Heart left ventricle (tissue), 16 donors: ENCODE measurements at regions of chr18 and their contacts with region 1.

Region 1: GRCh38 chr18:46411867-46412690 is 244.9 kb downstream of the LOXHD1 start:
- DNase-seq: peak in 4 of 5 donors; percentile 58 to 71 (median 62)
- ATAC-seq: peak; percentile 73 to 82 (median 76)
- H3K4me3 ChIP-seq: peak overlapping the region in 2 of 12 donors; percentile 9 to 22
- H3K27ac ChIP-seq: peak overlapping the region; percentile 35 to 98 (median 82)
- H3K4me1 ChIP-seq: peaks cover 4 to 91% (median 45%) of the 10 kb centered on the region in 12 donors
- H3K27me3 ChIP-seq: no peaks in the 10 kb centered on the region
- CTCF ChIP-seq: no peak
- POLR2A ChIP-seq: no peak

Region 2: GRCh38 chr18:46481048-46481846 is 69.2 kb after region 1 on chr18:
- intact Hi-C with region 1: loop called in 1 of 10 experiments (anchors 5 kb)
- DNase-seq: peak in 2 of 5 donors; percentile 26 to 45
- ATAC-seq: peak in 2 of 4 donors; percentile 53 to 61
- H3K4me3 ChIP-seq: no peak overlapping the region
- H3K27ac ChIP-seq: no peak overlapping the region
- H3K4me1 ChIP-seq: peaks cover 0 to 10% (median 0%) of the 10 kb centered on the region in 12 donors
- H3K27me3 ChIP-seq: no peaks in the 10 kb centered on the region
- CTCF ChIP-seq: peak; percentile 59 to 81 (median 70)
- POLR2A ChIP-seq: no peak

Region 3: GRCh38 chr18:46536215-46536874 is 124.3 kb after region 1 on chr18:
- intact Hi-C with region 1: no loop called
- DNase-seq: no peak
- ATAC-seq: no peak
- H3K4me3 ChIP-seq: no peak overlapping the region
- H3K27ac ChIP-seq: no peak overlapping the region
- H3K4me1 ChIP-seq: no peaks in the 10 kb centered on the region
- H3K27me3 ChIP-seq: no peaks in the 10 kb centered on the region
- CTCF ChIP-seq: no peak
- POLR2A ChIP-seq: no peak